AG04449 (cell line): ENCODE measurements at regions of chr3 and their contacts with region 1.

Region 1: DNA sequence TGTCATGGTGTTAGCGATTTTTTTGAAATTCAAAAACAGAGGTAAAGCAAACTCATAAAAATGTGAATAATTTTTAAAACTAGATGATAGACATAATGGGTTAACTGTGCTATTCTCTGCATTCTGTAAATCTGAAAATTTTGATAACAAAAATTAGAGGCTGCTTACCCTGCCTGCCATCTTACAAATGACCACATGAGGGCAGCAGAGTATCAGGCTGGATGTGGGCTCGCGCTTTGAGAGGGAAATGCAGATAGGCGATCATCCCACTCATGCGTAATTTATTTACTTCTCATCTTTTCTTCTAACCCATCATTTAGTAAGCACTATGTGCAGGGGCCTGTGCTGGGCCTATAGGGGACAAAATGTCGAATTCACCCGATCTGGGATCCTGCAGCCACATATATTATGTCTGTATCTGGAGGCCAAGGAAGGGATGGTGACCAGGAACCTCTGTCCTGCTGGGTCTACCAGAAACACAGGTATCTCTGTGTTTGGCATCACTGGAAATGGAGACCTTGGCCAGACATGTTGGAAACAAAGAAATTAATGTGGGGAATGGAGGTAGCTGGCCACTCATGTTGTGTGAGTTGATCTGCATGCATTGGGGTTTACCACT is 7.8 kb upstream of the RAD18 start:
- DNase-seq: no peak
- H3K4me3 ChIP-seq: no peak overlapping the region
- CTCF ChIP-seq: peak; percentile 79

Region 2: DNA sequence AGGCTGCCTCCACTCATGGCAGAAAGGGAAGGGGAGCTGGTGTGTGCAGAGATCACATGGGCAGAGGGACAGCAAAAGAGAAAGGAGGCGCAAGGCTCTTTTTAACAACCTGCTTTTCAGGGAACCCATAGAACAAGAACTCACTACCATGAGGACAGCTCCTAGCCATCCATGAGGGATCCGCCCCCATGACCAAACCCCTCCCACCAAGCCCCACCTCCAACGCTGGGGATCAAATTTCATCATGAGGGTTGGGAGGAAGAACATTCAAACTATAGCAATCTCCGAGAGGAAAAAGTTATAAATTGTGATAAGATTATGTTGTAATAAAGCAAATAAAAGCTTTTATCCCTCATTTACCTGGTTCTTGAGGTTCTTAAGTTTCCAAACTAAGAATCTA is 554.1 kb before region 1 on chr3:
- CTCF ChIA-PET with region 1: no interaction called
- POLR2A ChIA-PET with region 1: no interaction called
- DNase-seq: no peak
- H3K4me3 ChIP-seq: no peak overlapping the region
- CTCF ChIP-seq: no peak

Region 3: DNA sequence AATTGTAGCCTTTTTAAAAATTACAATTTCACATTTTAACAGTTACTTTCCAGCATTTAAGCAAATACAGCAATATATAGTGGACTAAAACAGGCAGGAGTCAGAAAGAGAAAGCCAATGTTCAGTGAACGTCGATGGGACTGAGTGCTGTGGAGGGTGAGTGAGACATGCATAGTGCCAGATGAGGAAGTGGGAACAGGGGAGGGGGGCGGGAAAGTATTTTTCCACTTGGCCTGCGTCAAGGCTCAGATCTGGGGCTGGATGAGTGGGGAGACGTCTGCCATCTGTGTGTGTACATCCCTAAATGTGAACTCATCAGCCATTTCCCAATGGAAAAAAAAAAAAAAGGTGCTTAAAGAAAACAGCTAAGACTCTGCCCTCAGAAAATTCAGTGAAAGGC is 11.4 kb after region 1 on chr3:
- CTCF ChIA-PET with region 1: interaction called, 139 read pairs
- POLR2A ChIA-PET with region 1: no interaction called
- DNase-seq: no peak
- H3K4me3 ChIP-seq: no peak overlapping the region
- CTCF ChIP-seq: no peak

Region 4: GRCh38 chr3:9013782-9014563 is 42.9 kb after region 1 on chr3:
- CTCF ChIA-PET with region 1: interaction called, 13 read pairs
- POLR2A ChIA-PET with region 1: no interaction called
- DNase-seq: no peak
- H3K4me3 ChIP-seq: no peak overlapping the region
- CTCF ChIP-seq: peak; percentile 10

Region 5: DNA sequence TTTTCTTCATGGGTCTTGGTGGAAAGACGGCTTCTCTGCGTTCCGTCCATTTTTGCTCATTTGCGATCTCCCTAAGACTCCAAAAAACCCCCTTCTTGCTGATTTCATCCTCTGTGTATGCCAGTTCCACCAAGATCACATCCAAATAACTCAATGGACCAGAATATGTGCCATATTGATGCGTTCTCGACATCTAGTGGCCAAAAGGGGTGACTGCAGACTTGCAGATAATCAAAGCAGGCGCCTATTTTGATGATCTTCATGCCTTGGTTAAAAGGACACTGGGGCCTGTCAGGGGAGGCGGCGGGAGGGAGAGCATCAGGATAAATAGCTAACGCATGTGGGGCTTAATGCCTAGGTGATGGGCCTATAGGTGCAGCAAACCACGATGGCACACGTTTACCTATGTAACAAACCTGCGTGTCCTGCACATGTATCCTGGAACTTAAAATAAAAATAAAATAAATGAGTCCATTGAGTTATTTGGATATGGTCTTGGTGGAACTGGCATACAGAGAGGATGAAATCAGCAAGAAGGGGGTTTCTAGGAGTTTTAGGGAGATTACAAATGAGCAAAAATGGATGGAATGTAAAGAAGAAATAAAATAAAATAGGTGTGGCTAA is 96.4 kb after region 1 on chr3:
- CTCF ChIA-PET with region 1: interaction called, 89 read pairs
- POLR2A ChIA-PET with region 1: no interaction called
- DNase-seq: peak; percentile 23
- H3K4me3 ChIP-seq: no peak overlapping the region
- CTCF ChIP-seq: peak; percentile 85

Region 6: DNA sequence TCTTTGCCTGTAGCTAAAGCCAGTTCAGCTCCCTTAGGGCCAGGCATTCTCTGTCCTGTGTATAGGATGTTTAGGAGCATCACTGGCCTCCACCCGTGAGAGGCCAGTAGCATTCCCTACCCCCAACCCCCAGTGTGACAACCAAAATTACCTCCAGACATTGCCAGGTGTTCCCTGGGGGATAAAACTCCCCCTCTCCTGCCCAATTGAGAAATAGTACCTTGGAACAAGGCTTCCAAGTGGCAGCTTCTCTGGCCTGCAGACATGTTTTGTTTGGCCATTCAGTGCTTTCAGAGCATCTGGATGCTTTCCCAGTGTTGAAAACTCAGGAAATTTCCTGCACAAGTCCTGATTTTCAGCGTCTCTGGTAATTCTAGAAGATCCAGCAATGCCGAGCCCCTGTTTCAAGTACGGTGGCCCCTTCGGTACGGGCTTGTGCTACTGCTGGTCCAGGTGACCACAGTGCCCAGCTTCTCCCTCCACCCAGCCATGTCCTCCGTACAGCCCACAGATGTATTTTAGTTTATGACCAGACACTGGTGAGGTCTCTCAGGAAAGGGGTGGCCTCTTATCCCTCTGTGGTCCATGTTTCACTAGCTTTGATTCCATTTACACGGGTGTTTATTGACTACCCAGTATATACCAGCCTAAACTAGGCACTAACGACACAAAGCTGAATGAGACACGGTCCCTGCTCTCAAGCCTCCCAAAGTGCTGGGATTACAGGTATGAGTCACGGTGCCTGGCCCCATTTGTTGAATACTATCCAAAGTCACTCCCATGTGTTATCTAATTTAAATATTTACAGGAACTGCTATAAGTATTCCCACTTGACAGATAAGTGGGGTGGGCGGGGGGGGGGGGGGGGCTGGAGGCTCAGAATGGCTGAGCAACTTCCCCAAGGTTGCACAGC is 117.6 kb after region 1 on chr3:
- CTCF ChIA-PET with region 1: no interaction called
- POLR2A ChIA-PET with region 1: no interaction called
- DNase-seq: no peak
- H3K4me3 ChIP-seq: no peak overlapping the region
- CTCF ChIP-seq: no peak